B cell (primary cell): ENCODE measurements at regions of chr2 and their contacts with region 1.

Region 1: GRCh38 chr2:242088471-242089212 is 219.1 kb downstream of the RTP5 start:
- DNase-seq: peak; percentile 95
- ATAC-seq: peak; percentile 91
- H3K4me3 ChIP-seq: peak overlapping the region in 4 of 5 experiments; percentile 59 to 80 (median 72)
- H3K4me3 Mint-ChIP-seq: peak overlapping the region; percentile 90
- H3K27ac ChIP-seq: peak overlapping the region; percentile 62 to 90
- H3K27ac Mint-ChIP-seq: peak overlapping the region; percentile 92
- H3K4me1 ChIP-seq: peaks cover 30 to 35% of the 10 kb centered on the region in 2 donors
- H3K4me1 Mint-ChIP-seq: peaks cover 51% of the 10 kb centered on the region
- H3K27me3 ChIP-seq: no peaks in the 10 kb centered on the region
- H3K27me3 Mint-ChIP-seq: no peaks in the 10 kb centered on the region
- CTCF ChIP-seq: no peak

Region 2: DNA sequence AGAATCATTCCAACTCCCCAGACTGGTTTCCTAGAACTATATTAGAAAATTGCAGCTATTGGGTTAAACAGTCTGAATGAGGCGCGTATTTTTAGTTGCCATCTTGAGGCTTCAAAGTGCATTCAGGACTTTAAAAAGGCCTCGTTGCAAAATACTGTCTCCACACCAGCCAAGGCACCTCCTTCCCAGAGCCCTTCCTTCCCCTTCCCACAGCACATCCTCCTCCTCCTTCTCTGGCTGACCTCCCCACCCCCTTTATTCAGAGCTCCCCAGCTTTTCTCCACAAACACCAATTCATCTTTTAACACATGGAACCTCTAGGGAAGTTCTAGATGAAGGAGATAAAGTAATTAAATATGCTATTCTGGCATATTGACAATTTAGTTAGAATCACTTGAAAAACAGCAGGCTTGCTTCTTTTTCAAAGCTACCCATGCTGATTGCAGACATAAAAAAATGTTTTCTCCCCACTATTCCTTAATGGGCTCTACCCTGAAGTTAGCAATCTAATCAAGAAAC is 128.8 kb before region 1 on chr2:
- CTCF ChIA-PET with region 1: no interaction called
- POLR2A ChIA-PET with region 1: no interaction called
- intact Hi-C with region 1: loop called (anchors 5 kb)
- DNase-seq: no peak
- ATAC-seq: no peak
- H3K4me3 ChIP-seq: no peak overlapping the region
- H3K4me3 Mint-ChIP-seq: no peak overlapping the region
- H3K27ac ChIP-seq: peak overlapping the region in 1 of 2 donors; percentile 77
- H3K27ac Mint-ChIP-seq: peak overlapping the region; percentile 79
- H3K4me1 ChIP-seq: peaks cover 32 to 33% of the 10 kb centered on the region in 2 donors
- H3K4me1 Mint-ChIP-seq: peaks cover 46% of the 10 kb centered on the region
- H3K27me3 ChIP-seq: no peaks in the 10 kb centered on the region
- H3K27me3 Mint-ChIP-seq: no peaks in the 10 kb centered on the region
- CTCF ChIP-seq: no peak